MCF 10A (cell line): ENCODE measurements at regions of chr17 and their contacts with region 1.

Region 1: DNA sequence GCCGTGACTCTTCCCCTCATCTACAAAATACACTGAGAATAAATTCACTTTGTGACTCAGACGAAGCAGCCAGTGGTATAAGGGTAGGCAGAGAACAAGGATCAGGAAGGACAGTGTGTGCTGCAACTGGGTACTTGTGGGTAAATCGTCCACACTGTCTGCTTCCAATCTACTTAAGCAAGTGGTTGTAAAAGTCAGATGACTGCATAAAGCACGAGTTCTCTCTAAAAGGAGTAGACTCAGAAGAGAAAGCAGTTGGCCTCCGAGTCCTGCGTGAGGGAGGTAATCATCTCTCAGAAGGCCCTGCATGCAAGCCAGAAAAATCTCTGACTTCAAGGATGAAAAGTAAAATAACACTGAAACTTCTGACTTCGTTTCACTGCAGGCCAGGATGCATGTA is 43.1 kb downstream of the ANKFY1 start:
- DNase-seq: no peak
- H3K4me3 Mint-ChIP-seq: no peak overlapping the region
- H3K27ac Mint-ChIP-seq: no peak overlapping the region
- H3K4me1 Mint-ChIP-seq: peaks cover under 1% of the 10 kb centered on the region
- H3K27me3 Mint-ChIP-seq: no peaks in the 10 kb centered on the region
- CTCF ChIP-seq: no peak

Region 2: GRCh38 chr17:4100883-4101756 is 119.5 kb before region 1 on chr17:
- CTCF ChIA-PET with region 1: no interaction called
- POLR2A ChIA-PET with region 1: no interaction called
- intact Hi-C with region 1: no loop called
- DNase-seq: no peak
- H3K4me3 Mint-ChIP-seq: no peak overlapping the region
- H3K27ac Mint-ChIP-seq: peak overlapping the region; percentile 65
- H3K4me1 Mint-ChIP-seq: no peaks in the 10 kb centered on the region
- H3K27me3 Mint-ChIP-seq: no peaks in the 10 kb centered on the region
- CTCF ChIP-seq: no peak

Region 3: DNA sequence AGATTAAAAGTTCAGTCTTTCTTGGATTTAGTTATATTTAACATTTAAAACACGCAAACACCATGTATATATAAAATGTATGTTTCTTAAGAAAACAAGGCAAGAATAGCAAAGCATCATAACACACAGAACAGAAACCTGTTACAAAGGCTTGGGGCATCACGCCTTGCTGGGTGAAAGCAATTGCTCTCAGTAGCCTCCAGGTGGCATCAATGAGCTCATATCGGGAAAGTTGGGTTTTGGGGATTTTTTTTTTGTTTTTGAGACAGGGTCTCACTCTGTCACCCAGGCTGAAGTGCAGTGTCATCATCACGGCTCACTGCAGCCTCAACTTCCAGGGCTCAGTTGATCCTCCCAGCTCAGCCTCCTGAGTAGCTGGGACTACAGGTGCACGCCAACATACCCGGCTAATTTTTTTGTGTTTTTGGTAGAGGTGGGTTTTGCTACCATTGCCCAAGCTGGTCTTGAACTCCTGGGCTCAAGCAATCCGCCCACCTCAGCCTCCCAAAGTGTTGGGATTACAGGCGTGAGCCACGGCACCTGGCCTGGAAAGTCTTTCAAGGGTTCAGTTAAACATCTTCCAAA is 20.7 kb before region 1 on chr17:
- CTCF ChIA-PET with region 1: interaction called, 13 read pairs
- POLR2A ChIA-PET with region 1: no interaction called
- intact Hi-C with region 1: no loop called
- DNase-seq: peak; percentile 55
- H3K4me3 Mint-ChIP-seq: no peak overlapping the region
- H3K27ac Mint-ChIP-seq: no peak overlapping the region
- H3K4me1 Mint-ChIP-seq: peaks cover 5% of the 10 kb centered on the region
- H3K27me3 Mint-ChIP-seq: no peaks in the 10 kb centered on the region
- CTCF ChIP-seq: peak; percentile 60

Region 4: GRCh38 chr17:4249452-4250029 is 28.9 kb after region 1 on chr17:
- CTCF ChIA-PET with region 1: interaction called, 28 read pairs
- POLR2A ChIA-PET with region 1: interaction called, 13 read pairs
- intact Hi-C with region 1: loop called (anchors 1 kb)
- DNase-seq: peak; percentile 59
- H3K4me3 Mint-ChIP-seq: no peak overlapping the region
- H3K27ac Mint-ChIP-seq: peak overlapping the region; percentile 14
- H3K4me1 Mint-ChIP-seq: peaks cover 37% of the 10 kb centered on the region
- H3K27me3 Mint-ChIP-seq: no peaks in the 10 kb centered on the region
- CTCF ChIP-seq: peak; percentile 44

Region 5: DNA sequence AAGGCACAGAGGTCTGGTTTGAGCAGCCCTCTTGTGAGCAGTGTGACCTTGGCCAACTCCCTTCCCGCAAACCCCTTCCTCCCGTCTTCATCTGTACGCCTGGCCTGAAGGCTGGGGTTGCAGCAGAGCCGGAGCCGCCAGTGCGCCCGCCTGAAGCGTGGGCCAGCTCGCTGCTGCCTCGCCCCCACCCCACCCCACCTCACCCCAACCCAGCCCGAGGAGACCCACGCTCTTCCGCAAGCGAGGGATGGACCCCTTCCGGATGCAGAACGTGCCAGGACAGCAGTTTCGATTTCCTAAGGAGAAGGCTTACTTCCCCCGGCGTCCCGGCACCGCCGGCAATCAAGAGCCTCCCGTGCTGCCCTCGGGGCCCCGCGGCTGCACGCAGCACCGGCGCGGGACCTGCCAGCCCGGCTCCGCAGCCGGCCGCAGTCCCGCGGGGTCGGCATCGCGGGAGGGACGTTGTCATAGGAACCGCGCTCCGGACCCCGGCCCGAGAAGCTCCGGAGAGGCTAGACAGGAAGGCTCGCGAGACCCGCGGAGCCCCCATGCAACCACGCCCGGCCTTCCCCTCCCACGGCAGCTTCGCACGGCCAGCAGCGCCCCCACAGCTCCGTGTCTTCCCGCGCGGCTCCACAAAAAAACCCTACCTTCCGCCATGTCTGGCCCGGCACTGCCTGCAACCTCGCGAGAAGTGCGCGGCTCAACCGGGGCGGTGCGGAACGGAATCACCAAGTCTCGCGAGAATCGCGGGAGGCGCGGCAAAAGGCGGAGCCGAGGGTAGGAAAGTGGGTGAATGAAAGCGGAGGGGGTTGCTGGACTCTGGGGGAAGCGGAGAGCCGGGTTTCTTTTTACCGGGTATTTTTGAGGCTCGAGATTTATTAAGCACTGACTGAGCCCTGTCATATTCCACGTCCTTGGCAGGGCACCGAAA is 42.9 kb after region 1 on chr17 and contains the start of gene ANKFY1:
- CTCF ChIA-PET with region 1: interaction called, 4 read pairs
- POLR2A ChIA-PET with region 1: interaction called, 30 read pairs
- intact Hi-C with region 1: loop called (anchors 5 kb)
- DNase-seq: peak; percentile 93
- H3K4me3 Mint-ChIP-seq: peak within 1 kb of the TSS; percentile 94
- H3K27ac Mint-ChIP-seq: peak within 1 kb of the TSS; percentile 88
- H3K4me1 Mint-ChIP-seq: peaks cover 17% of the 10 kb centered on the region
- H3K27me3 Mint-ChIP-seq: no peaks in the 10 kb centered on the region
- CTCF ChIP-seq: no peak
- total RNA-seq, gene ANKFY1: 34.9 and 42.8 TPM in 2 replicates

Region 6: GRCh38 chr17:4304417-4305027 is 83.9 kb after region 1 on chr17:
- CTCF ChIA-PET with region 1: interaction called, 8 read pairs
- POLR2A ChIA-PET with region 1: interaction called, 3 read pairs
- intact Hi-C with region 1: loop called (anchors 1 kb)
- DNase-seq: peak; percentile 73
- H3K4me3 Mint-ChIP-seq: no peak overlapping the region
- H3K27ac Mint-ChIP-seq: no peak overlapping the region
- H3K4me1 Mint-ChIP-seq: peaks cover 6% of the 10 kb centered on the region
- H3K27me3 Mint-ChIP-seq: no peaks in the 10 kb centered on the region
- CTCF ChIP-seq: peak; percentile 64

Region 7: DNA sequence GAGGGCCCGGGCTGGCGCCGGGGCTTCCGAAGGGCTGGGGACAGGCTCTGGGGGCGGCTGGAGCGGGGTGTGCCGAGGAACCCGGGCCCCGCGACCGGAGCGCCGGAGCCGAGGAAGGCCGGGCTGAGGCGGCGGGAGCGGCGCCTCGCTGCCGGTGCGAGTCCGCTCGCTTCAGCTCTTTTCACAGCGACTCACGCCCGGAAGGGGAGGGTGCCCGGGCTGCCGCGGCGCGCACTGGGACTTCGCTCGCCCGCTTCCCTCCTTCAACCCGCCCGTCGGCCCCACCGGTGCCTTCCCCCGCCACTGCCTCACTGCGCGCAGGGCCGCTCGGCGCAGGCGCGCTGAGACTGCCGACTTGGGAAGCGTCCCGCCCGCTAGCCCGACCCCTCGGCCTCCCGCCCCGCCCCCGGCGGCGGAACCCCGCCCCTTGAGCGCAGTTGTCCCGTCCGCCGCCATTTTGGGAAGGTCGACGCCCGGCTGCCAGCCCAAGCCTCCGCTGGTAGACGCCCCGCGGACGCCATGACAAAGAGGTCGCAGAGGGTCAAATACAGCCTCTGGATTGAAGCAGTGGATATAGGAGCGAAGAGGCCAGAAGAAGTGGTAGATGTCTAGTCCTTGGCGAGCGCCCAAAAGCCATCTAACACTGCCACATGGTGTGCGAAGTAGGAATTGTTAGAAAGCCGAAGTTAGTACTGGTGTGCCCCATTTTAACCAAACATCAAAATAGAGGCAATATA is 145.8 kb after region 1 on chr17 and contains the start of gene UBE2G1:
- CTCF ChIA-PET with region 1: interaction called, 5 read pairs
- POLR2A ChIA-PET with region 1: no interaction called
- intact Hi-C with region 1: loop called (anchors 1 kb)
- DNase-seq: peak; percentile 95
- H3K4me3 Mint-ChIP-seq: peak within 1 kb of the TSS; percentile 80
- H3K27ac Mint-ChIP-seq: peak within 1 kb of the TSS; percentile 87
- H3K4me1 Mint-ChIP-seq: peaks cover 12% of the 10 kb centered on the region
- H3K27me3 Mint-ChIP-seq: no peaks in the 10 kb centered on the region
- CTCF ChIP-seq: peak; percentile 31
- total RNA-seq, gene UBE2G1: 65.1 and 78.5 TPM in 2 replicates

Region 8: DNA sequence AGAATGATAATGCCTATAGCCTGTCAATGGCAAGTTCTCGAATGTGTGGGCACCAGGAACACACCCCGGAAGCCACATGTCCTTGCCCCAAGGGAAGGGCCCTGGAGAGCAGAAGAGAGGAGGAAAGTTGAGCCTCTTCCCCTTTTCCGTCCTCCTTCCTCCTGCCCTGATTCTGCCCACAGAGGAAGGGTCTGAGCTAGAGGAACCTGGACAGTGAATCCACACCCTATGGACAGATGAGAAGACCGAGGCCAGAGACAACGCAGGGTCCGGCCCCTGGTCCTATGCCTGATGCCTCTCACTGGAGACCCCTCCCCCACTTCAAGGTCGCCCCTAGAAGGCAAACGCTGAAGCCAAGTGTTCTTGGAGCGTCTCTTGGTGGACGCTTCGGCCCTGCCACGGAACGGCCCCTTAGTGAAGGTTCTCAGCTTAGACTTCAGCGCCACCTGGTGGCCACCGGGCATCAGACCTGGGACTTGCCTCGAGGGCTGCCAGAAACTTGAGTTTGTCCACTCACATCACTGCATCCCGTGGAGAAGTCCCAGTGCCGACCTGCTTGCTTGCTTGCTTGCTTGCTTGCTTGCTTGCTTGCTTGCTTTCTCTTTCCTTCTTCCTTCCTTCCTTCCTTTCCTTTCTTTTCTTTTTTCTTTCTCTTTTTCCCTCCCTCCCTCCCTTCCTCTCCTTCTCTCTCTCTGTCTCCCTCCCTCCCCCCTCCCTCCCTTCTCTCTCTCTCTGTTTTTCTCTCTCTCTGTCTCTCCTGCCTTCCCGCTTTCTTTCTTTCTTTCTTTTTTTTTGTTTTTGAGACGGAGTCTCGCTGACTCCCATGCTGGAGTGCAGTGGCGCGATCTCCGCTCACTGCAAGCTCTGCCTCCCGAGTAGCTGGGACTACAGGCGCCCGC is 192.5 kb after region 1 on chr17:
- CTCF ChIA-PET with region 1: interaction called, 19 read pairs
- POLR2A ChIA-PET with region 1: interaction called, 6 read pairs
- intact Hi-C with region 1: loop called (anchors 1 kb)
- DNase-seq: peak; percentile 83
- H3K4me3 Mint-ChIP-seq: no peak overlapping the region
- H3K27ac Mint-ChIP-seq: no peak overlapping the region
- H3K4me1 Mint-ChIP-seq: peaks cover 9% of the 10 kb centered on the region
- H3K27me3 Mint-ChIP-seq: no peaks in the 10 kb centered on the region
- CTCF ChIP-seq: peak; percentile 90